Ascending aorta (tissue), 2 donors: ENCODE measurements at regions of chr15 and their contacts with region 1.

Region 1: GRCh38 chr15:22968366-22968765 is 11.8 kb downstream of the CYFIP1 start:
- DNase-seq: no peak
- H3K4me3 ChIP-seq: no peak overlapping the region
- H3K27ac ChIP-seq: peak overlapping the region; percentile 75 to 88
- H3K4me1 ChIP-seq: peaks cover 10 to 25% of the 10 kb centered on the region in 2 donors
- H3K27me3 ChIP-seq: no peaks in the 10 kb centered on the region
- CTCF ChIP-seq: no peak

Region 2: DNA sequence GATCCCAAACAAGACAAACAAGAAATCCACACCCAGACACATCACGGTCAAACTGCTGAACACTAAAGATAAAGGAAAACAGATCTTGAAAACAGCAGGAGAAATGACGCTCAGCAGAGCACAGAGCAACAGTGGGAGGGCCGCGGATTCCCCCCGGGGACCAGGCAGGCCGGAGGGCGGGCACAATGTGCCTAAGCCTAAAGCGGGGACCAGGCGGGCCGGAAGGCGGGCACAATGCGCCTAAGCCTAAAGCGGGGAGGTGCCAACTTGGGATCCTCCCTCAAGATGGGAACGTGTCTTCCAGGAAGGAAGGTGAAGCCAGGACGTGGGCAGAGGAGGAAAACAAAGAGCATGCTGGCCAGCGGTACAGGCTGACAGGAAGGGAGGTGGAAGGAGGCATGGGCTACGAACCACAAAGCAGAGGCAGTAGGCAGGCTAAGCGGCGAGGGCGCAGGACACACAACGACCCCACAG is 19.3 kb before region 1 on chr15:
- intact Hi-C with region 1: loop called (anchors 2 kb)
- DNase-seq: peak in 1 of 2 donors; percentile 81
- H3K4me3 ChIP-seq: peak overlapping the region in 1 of 2 donors; percentile 25
- H3K27ac ChIP-seq: peak overlapping the region; percentile 57 to 64
- H3K4me1 ChIP-seq: peaks cover 7 to 45% of the 10 kb centered on the region in 2 donors
- H3K27me3 ChIP-seq: no peaks in the 10 kb centered on the region
- CTCF ChIP-seq: no peak

Region 3: GRCh38 chr15:23039151-23039916 is 71.0 kb after region 1 on chr15 and contains the start of gene TUBGCP5:
- intact Hi-C with region 1: loop called (anchors 10 kb)
- DNase-seq: peak; percentile 91 to 99
- H3K4me3 ChIP-seq: peak within 1 kb of the TSS; percentile 75 to 85
- H3K27ac ChIP-seq: peak within 1 kb of the TSS; percentile 68 to 76
- H3K4me1 ChIP-seq: peaks cover 0 to 8% of the 10 kb centered on the region in 2 donors
- H3K27me3 ChIP-seq: no peaks in the 10 kb centered on the region
- CTCF ChIP-seq: peak in 2 of 3 experiments; percentile 46 to 51
- total RNA-seq, gene TUBGCP5: 17.1 TPM